Gastrocnemius medialis (tissue), 4 donors: ENCODE measurements at regions of chr15 and their contacts with region 1.

Region 1: GRCh38 chr15:27358751-27359434 is 387.9 kb downstream of the GABRG3 start:
- DNase-seq: no peak
- ATAC-seq: no peak
- H3K4me3 ChIP-seq: no peak overlapping the region
- H3K27ac ChIP-seq: no peak overlapping the region
- H3K4me1 ChIP-seq: no peaks in the 10 kb centered on the region
- H3K27me3 ChIP-seq: no peaks in the 10 kb centered on the region
- CTCF ChIP-seq: peak in 2 of 5 experiments; percentile 26 to 29
- POLR2A ChIP-seq: no peak

Region 2: GRCh38 chr15:26891448-26892181 is 467.3 kb before region 1 on chr15:
- in situ Hi-C with region 1: loop called in 1 of 4 experiments (anchors 25 kb)
- intact Hi-C with region 1: no loop called
- DNase-seq: no peak
- ATAC-seq: no peak
- H3K4me3 ChIP-seq: no peak overlapping the region
- H3K27ac ChIP-seq: no peak overlapping the region
- H3K4me1 ChIP-seq: no peaks in the 10 kb centered on the region
- H3K27me3 ChIP-seq: peaks cover 0 to 10% (median 2%) of the 10 kb centered on the region in 3 donors
- CTCF ChIP-seq: peak in 1 of 5 experiments; percentile 14
- POLR2A ChIP-seq: no peak

Region 3: DNA sequence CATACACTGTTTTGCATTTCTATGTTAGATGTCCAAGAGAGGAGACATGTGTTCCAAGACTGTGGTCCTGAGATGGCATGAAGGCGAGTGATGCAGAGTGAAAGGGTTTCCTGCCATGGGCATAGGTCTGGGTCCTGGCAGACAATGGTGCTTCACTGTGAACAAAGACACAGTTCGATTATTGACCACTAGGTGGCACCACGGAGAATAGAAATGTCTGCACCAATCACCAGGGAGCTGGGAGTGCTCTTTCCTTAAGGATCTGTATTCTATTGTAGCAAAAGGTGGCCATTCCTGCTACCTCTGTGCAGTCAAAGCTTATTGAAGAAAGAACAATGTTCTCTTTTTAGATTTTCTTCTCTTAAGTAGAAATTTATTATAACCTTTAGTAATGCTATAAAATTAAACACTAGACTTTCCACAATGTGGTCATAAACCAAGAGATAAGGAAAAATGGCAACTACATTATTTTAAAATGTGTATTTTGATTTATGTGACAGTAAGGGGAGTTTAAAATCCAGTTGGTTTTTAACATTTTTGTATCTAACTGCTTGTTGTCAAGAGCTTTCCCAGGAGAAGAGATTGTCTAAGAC is 299.2 kb before region 1 on chr15:
- in situ Hi-C with region 1: loop called in 1 of 4 experiments (anchors 25 kb)
- intact Hi-C with region 1: no loop called
- DNase-seq: no peak
- ATAC-seq: no peak
- H3K4me3 ChIP-seq: no peak overlapping the region
- H3K27ac ChIP-seq: no peak overlapping the region
- H3K4me1 ChIP-seq: no peaks in the 10 kb centered on the region
- H3K27me3 ChIP-seq: no peaks in the 10 kb centered on the region
- CTCF ChIP-seq: peak in 2 of 5 experiments; percentile 11 to 40
- POLR2A ChIP-seq: no peak